Heart right ventricle (tissue), 16 donors: ENCODE measurements at regions of chr18 and their contacts with region 1.

Region 1: DNA sequence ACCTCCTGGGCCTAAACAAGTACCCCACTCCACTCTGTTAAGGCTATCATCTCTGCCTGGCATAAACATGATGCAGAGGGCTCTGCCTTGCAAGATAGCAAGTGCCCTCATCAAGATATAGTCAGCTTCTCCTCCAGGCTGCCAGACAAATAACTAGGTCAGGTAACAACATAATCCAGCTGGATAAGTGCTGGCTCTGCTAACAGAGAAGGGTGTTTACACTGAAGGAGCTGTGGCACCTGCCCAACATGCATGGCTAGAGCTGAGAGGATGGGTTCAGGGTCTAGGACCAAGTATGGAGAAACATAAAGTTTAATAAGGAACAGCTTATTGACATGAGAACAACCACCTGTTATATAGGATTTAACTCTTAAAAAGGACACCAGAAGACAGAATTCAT is 42.8 kb downstream of the DLGAP1 start:
- DNase-seq: no peak
- ATAC-seq: no peak
- H3K4me3 ChIP-seq: no peak overlapping the region
- H3K27ac ChIP-seq: no peak overlapping the region
- H3K4me1 ChIP-seq: no peaks in the 10 kb centered on the region
- H3K27me3 ChIP-seq: no peaks in the 10 kb centered on the region
- CTCF ChIP-seq: no peak

Region 2: DNA sequence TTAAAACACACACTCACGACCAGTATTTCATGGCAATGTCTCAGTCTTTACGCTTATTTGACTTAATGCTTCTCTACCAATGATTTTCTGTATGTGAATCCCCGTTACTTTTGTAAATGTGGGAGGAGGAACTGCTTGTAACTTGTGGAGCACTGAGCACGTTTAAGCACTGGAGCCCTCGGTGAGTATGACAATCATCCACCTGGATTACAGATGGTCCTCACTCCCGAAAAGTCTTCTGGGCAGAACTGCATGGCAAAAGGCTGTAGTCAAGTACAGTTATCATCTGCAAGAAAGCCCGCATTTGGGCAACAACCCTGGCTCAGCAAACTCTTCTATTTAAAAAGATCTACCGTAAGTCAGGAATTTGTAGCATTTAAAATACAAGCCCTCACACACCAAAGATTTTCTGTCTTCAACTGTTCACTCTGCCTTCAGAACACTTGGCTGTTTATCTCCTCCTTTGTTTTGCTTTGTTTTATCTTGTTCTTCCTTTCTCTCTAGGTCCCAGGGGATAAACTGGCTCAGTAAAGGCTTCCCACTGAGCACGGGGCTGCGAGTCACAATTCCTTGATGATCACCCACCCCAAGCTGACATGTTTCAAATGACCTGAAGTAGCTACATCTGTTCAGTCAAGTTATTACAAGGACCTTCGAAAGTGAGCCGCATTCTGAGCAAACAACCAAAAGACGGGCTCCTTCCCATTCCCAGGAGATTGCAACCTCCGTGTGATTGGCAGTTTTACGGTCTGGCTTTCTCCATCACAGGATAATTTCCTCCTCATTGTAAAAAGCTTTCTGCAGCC is 59.3 kb before region 1 on chr18:
- intact Hi-C with region 1: loop called in 1 of 10 experiments (anchors 10 kb)
- DNase-seq: no peak
- ATAC-seq: no peak
- H3K4me3 ChIP-seq: no peak overlapping the region
- H3K27ac ChIP-seq: no peak overlapping the region
- H3K4me1 ChIP-seq: no peaks in the 10 kb centered on the region
- H3K27me3 ChIP-seq: peaks cover 0 to 10% (median 0%) of the 10 kb centered on the region in 7 donors
- CTCF ChIP-seq: no peak

Region 3: GRCh38 chr18:4468511-4468910 is 56.2 kb after region 1 on chr18:
- intact Hi-C with region 1: loop called in 1 of 10 experiments (anchors 10 kb)
- DNase-seq: no peak
- ATAC-seq: no peak
- H3K4me3 ChIP-seq: no peak overlapping the region
- H3K27ac ChIP-seq: no peak overlapping the region
- H3K4me1 ChIP-seq: no peaks in the 10 kb centered on the region
- H3K27me3 ChIP-seq: no peaks in the 10 kb centered on the region
- CTCF ChIP-seq: no peak